ENCODE measurements at regions of chr3 and their contacts with region 1.

Region 1: GRCh38 chr3:178479860-178480259 is 56.4 kb upstream of the KCNMB2 start:
- DNase-seq: no peak
- H3K4me3 ChIP-seq: no peak overlapping the region
- H3K27ac ChIP-seq: no peak overlapping the region
- H3K4me1 ChIP-seq: no peaks in the 10 kb centered on the region
- H3K27me3 ChIP-seq: peaks cover 0 to 2% of the 10 kb centered on the region in 2 experiments
- CTCF ChIP-seq: no peak
- POLR2A ChIP-seq: no peak

Region 2: DNA sequence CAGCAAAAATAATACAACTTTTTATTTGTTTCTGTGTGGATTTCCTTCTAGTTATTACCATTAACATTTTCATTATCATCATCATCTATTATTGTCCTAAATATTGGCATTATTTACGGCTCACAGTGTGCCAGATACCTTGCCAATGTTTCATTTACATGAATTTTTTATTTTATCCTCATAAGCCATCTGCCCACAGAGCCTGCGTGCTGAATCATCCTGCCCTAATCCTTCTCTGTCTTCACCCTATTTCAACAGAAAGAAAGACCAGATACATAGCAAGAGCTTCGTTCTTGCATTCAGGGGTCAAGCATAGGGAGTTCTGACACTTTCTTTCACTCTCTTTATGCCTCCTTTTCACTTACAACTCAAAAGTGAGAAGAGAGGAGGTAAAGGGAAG is 138.3 kb after region 1 on chr3:
- CTCF ChIA-PET with region 1: no interaction called
- POLR2A ChIA-PET with region 1: no interaction called
- dilution Hi-C with region 1: no loop called
- intact Hi-C with region 1: loop called (anchors 10 kb)
- DNase-seq: no peak
- H3K4me3 ChIP-seq: no peak overlapping the region
- H3K27ac ChIP-seq: no peak overlapping the region
- H3K4me1 ChIP-seq: no peaks in the 10 kb centered on the region
- H3K27me3 ChIP-seq: no peaks in the 10 kb centered on the region
- CTCF ChIP-seq: no peak
- POLR2A ChIP-seq: no peak

Region 3: GRCh38 chr3:178629430-178630178 is 149.7 kb after region 1 on chr3:
- CTCF ChIA-PET with region 1: no interaction called
- POLR2A ChIA-PET with region 1: no interaction called
- dilution Hi-C with region 1: no loop called
- intact Hi-C with region 1: no loop called
- DNase-seq: no peak
- H3K4me3 ChIP-seq: no peak overlapping the region
- H3K27ac ChIP-seq: no peak overlapping the region
- H3K4me1 ChIP-seq: no peaks in the 10 kb centered on the region
- H3K27me3 ChIP-seq: no peaks in the 10 kb centered on the region
- CTCF ChIP-seq: no peak
- POLR2A ChIP-seq: no peak

Measured in endothelial cell of umbilical vein (primary cell).